A549 (cell line): ENCODE measurements at regions of chr5 and their contacts with region 1.

Region 1: GRCh38 chr5:150700594-150701293 is at the start of gene RBM22:
- DNase-seq: peak; percentile 74 to 90
- ATAC-seq: peak; percentile 96 to 98
- H3K4me3 ChIP-seq: peak within 1 kb of the TSS; percentile 97
- H3K27ac ChIP-seq: peak within 1 kb of the TSS; percentile 98 to 99
- H3K4me1 ChIP-seq: peaks cover 14% of the 10 kb centered on the region
- CTCF ChIP-seq: peak; percentile 60
- EP300 ChIP-seq: no peak
- POLR2A ChIP-seq: peak; percentile 80
- RAD21 ChIP-seq: peak in 1 of 2 experiments; percentile 6; a peak in 1 of 5 replicates
- polyA plus RNA-seq, gene RBM22: 65.3 and 75.7 TPM in 2 replicates

Region 2: GRCh38 chr5:150640311-150641005 is 60.3 kb before region 1 on chr5 and contains the start of gene SYNPO:
- CTCF ChIA-PET with region 1: interaction called, 3 read pairs
- POLR2A ChIA-PET with region 1: interaction called, 13 read pairs
- DNase-seq: peak; percentile 80 to 84
- ATAC-seq: peak; percentile 36 to 42
- H3K4me3 ChIP-seq: peak within 1 kb of the TSS; percentile 54
- H3K27ac ChIP-seq: peak within 1 kb of the TSS; percentile 95 to 96
- H3K4me1 ChIP-seq: peaks cover 88% of the 10 kb centered on the region
- CTCF ChIP-seq: no peak
- EP300 ChIP-seq: peak; percentile 39 to 40; a peak in 2 of 5 replicates
- POLR2A ChIP-seq: no peak; the same call in 1 of the 2 replicates
- RAD21 ChIP-seq: no peak; a peak in 1 of 5 replicates
- polyA plus RNA-seq, gene SYNPO: 13.7 and 20.7 TPM in 2 replicates

Region 3: GRCh38 chr5:150656191-150657132 is 44.3 kb before region 1 on chr5:
- CTCF ChIA-PET with region 1: interaction called, 15 read pairs
- POLR2A ChIA-PET with region 1: interaction called, 8 read pairs
- DNase-seq: peak; percentile 60 to 81
- ATAC-seq: peak; percentile 48 to 66
- H3K4me3 ChIP-seq: peak overlapping the region; percentile 50
- H3K27ac ChIP-seq: peak overlapping the region; percentile 83 to 96
- H3K4me1 ChIP-seq: peaks cover 43% of the 10 kb centered on the region
- CTCF ChIP-seq: peak; percentile 90
- EP300 ChIP-seq: no peak
- POLR2A ChIP-seq: peak; percentile 50
- RAD21 ChIP-seq: peak; percentile 71 to 98

Region 4: GRCh38 chr5:150672237-150672883 is 28.4 kb before region 1 on chr5:
- CTCF ChIA-PET with region 1: interaction called, 11 read pairs
- POLR2A ChIA-PET with region 1: interaction called, 4 read pairs
- DNase-seq: no peak
- ATAC-seq: peak; percentile 61 to 73
- H3K4me3 ChIP-seq: peak overlapping the region; percentile 43
- H3K27ac ChIP-seq: peak overlapping the region; percentile 17 to 80; a peak in 4 of 6 replicates
- H3K4me1 ChIP-seq: 0 out of 3 replicates have a peak, but pooled peaks cover 5% of the 10 kb centered on the region
- CTCF ChIP-seq: no peak
- EP300 ChIP-seq: no peak
- POLR2A ChIP-seq: no peak
- RAD21 ChIP-seq: no peak

Region 5: DNA sequence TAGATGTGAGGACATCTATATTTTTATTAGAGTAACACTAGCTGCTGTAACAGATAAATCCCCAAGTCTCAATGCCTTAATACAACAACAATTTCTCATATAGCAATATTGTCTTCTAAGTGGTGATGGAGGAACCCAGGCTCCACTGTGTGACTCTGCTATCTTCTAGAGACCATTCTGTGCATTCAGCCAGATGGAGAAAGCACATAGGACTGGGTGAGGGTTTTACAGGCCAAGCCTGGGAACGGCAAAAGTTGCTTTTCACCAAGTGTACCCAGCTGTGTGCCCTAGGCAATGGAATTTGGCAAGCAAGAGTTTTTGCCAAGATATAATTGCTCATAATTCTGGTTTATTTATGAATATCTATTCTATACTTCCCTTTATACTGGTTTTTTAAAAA is 11.6 kb before region 1 on chr5:
- CTCF ChIA-PET with region 1: interaction called, 27 read pairs
- POLR2A ChIA-PET with region 1: interaction called, 4 read pairs
- DNase-seq: no peak
- ATAC-seq: peak in 1 of 2 experiments; percentile 33; a peak in 1 of 6 replicates
- H3K4me3 ChIP-seq: no peak overlapping the region
- H3K27ac ChIP-seq: no peak overlapping the region
- H3K4me1 ChIP-seq: no peaks in the 10 kb centered on the region
- CTCF ChIP-seq: no peak
- EP300 ChIP-seq: no peak
- POLR2A ChIP-seq: no peak
- RAD21 ChIP-seq: no peak

Region 6: DNA sequence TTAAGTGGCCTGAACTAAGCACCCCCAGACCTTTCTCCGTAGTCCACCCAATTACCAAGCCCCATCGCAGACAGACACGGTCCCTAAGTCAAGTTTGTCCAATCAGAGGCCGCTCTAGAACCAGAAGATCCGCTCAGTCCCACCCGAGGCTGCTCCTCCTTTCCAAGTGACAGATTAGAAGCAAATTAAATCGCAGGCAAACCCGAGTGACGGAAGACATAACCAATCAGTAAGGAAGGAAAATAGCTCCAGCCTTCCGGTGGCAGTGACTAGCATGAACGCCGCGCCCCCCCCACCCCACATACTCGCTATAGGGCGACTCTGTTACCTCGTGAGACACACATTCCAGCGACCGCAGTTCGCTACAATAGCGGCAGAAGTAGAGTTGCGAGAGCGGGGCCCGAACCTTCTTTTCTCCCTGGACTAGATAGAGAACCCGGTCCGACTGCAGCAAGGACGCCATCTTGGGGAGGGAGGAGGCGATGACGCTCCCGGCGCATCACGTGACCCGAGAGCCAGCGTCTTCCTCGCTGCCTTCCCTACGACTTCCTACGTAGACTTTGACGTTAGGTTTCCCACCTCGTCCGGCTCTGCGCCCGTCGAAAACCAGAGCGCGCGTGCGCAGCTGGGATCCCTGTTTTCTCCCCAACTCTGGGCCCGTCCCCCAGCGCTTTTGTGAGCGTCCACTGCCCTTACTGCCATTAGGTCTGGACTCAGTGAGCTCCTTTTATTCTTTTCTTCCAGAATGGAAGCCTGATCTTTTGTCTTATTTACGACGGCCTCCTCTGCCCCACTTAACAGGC is 58.0 kb after region 1 on chr5 and contains the start of gene DCTN4:
- CTCF ChIA-PET with region 1: no interaction called
- POLR2A ChIA-PET with region 1: interaction called, 22 read pairs
- DNase-seq: peak; percentile 98 to 99
- ATAC-seq: peak; percentile 95 to 98
- H3K4me3 ChIP-seq: peak within 1 kb of the TSS; percentile 58
- H3K27ac ChIP-seq: peak within 1 kb of the TSS; percentile 91 to 93
- H3K4me1 ChIP-seq: peaks cover 11% of the 10 kb centered on the region
- CTCF ChIP-seq: no peak
- EP300 ChIP-seq: no peak
- POLR2A ChIP-seq: peak; percentile 66
- RAD21 ChIP-seq: no peak
- polyA plus RNA-seq, gene DCTN4: 34.8 and 38.4 TPM in 2 replicates

Region 7: DNA sequence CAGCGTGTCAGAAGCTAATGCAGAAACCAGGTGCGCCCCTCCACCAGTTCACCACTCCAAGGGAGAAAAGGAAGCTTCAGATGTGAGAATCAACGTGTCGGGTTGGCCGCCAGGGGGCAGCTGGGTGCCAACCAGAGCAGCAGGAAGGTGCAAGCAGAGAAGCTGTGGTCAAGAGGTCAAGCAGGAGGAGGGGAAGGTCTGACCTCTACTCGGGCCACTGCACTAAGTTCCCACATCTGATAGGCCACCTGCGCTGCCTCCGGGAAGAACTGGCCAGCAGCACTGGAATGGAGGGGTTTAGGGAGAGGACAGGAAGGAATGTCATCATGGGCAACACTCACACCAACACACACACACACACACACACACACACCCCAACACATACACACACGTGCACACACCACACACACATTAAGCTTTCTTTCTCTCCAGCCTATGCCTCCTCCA is 425.5 kb after region 1 on chr5:
- CTCF ChIA-PET with region 1: no interaction called
- POLR2A ChIA-PET with region 1: no interaction called
- DNase-seq: peak; percentile 72 to 74
- ATAC-seq: peak; percentile 84 to 93; a peak in 5 of 6 replicates
- H3K4me3 ChIP-seq: no peak overlapping the region
- H3K27ac ChIP-seq: no peak overlapping the region
- H3K4me1 ChIP-seq: peaks cover 7% of the 10 kb centered on the region; the same call in 2 of the 3 replicates
- CTCF ChIP-seq: peak; percentile 85
- EP300 ChIP-seq: no peak
- POLR2A ChIP-seq: no peak
- RAD21 ChIP-seq: peak; percentile 74 to 78